ENCODE measurements at regions of chr17 and their contacts with region 1.

Region 1: GRCh38 chr17:2137342-2138098 is 82.6 kb downstream of the HIC1 start:
- DNase-seq: peak; percentile 51
- ATAC-seq: peak; percentile 86
- H3K4me3 ChIP-seq: no peak overlapping the region; the same call in 1 of the 2 replicates
- H3K27ac ChIP-seq: peak overlapping the region; percentile 87
- H3K4me1 ChIP-seq: peaks cover 41% of the 10 kb centered on the region
- H3K27me3 ChIP-seq: no peaks in the 10 kb centered on the region
- CTCF ChIP-seq: no peak
- EP300 ChIP-seq: no peak
- POLR2A ChIP-seq: peak; percentile 23; the same call in 1 of the 2 replicates
- RAD21 ChIP-seq: no peak

Region 2: GRCh38 chr17:2025220-2025621 is 112.3 kb before region 1 on chr17 and contains the start of gene RTN4RL1:
- CTCF ChIA-PET with region 1: no interaction called
- POLR2A ChIA-PET with region 1: no interaction called
- RAD21 ChIA-PET with region 1: no interaction called
- SMC1A ChIA-PET with region 1: no interaction called
- in situ Hi-C with region 1: no loop called
- intact Hi-C with region 1: no loop called
- DNase-seq: no peak
- ATAC-seq: no peak
- H3K4me3 ChIP-seq: peak within 1 kb of the TSS; percentile 74
- H3K27ac ChIP-seq: no peak within 1 kb of the TSS
- H3K4me1 ChIP-seq: peaks cover 4% of the 10 kb centered on the region
- H3K27me3 ChIP-seq: peaks cover 18 to 21% of the 10 kb centered on the region in 2 experiments
- CTCF ChIP-seq: no peak
- EP300 ChIP-seq: no peak
- POLR2A ChIP-seq: no peak
- RAD21 ChIP-seq: no peak
- polyA plus RNA-seq, gene RTN4RL1: not detected

Region 3: DNA sequence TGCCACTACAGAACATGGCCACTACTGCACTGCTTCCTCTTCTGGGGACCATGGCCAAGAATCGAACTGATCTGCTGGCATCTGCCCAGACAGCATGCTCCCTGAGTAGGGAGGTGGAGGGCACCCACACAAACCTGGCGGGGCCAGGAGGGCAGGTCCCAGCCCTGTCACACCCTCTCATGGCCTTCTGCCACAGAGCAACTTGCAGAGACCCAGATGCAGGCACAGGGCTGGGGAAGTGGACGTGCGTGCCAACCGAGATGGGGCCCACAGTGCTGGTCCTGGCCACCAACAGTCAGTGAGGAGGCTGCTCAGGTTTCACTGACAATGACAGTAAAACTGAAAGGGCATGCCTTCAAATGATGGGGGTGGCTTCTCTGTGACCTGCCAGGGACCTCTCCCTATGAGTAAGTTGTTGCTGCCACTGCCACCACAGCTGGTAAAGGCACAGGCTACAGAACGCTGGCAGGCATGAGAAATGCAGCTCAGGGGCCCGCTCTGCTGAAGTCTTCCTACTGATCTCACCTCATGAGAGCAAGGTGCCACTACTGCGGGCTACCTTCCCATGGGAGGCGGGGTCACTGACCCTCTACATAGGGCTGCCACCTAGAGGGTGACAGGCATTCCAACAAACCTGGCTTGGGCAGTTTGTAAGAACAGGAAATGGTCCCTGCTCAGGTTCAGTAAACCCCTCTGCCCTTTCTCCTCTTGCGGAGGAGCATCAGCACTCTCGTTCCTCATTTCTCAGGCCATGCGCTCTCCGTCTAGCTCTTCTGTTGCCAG is 67.1 kb before region 1 on chr17:
- CTCF ChIA-PET with region 1: interaction called, 6 read pairs
- POLR2A ChIA-PET with region 1: interaction called, 5 read pairs
- RAD21 ChIA-PET with region 1: interaction called, 5 read pairs
- SMC1A ChIA-PET with region 1: interaction called, 11 read pairs
- in situ Hi-C with region 1: no loop called
- intact Hi-C with region 1: no loop called
- DNase-seq: peak; percentile 96
- ATAC-seq: peak; percentile 93
- H3K4me3 ChIP-seq: peak overlapping the region; percentile 1; the same call in 1 of the 2 replicates
- H3K27ac ChIP-seq: peak overlapping the region; percentile 95
- H3K4me1 ChIP-seq: peaks cover 43% of the 10 kb centered on the region
- H3K27me3 ChIP-seq: no peaks in the 10 kb centered on the region
- CTCF ChIP-seq: peak in 2 of 3 experiments; percentile 7 to 22; a peak in 1 of 6 replicates
- EP300 ChIP-seq: peak; percentile 96 to 99
- POLR2A ChIP-seq: peak; percentile 79
- RAD21 ChIP-seq: 0 out of 2 replicates have a peak, but pooled peaks have one; percentile 0

Region 4: DNA sequence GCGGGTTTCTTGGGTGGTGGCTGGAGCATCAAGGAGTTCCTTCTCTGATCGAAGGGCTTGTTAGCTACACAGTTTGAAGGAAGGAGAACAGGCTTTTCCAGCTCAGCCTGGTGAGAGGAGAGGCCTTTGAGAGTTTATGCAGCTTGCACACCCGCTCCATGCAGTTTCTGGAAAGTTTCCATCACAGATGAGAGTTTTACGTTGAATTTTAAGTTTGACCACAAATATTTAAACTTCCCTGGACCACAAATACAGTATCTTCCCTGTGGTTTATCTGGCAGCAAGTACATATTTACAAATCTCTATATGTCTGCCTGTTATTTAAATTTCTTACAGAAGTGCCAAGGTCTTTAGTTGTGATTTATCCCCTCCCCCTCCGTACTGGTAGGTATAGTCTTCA is 25.8 kb before region 1 on chr17:
- CTCF ChIA-PET with region 1: no interaction called
- POLR2A ChIA-PET with region 1: interaction called, 4 read pairs
- RAD21 ChIA-PET with region 1: no interaction called
- SMC1A ChIA-PET with region 1: interaction called, 17 read pairs
- in situ Hi-C with region 1: no loop called
- intact Hi-C with region 1: no loop called
- DNase-seq: no peak
- ATAC-seq: no peak
- H3K4me3 ChIP-seq: no peak overlapping the region
- H3K27ac ChIP-seq: no peak overlapping the region
- H3K4me1 ChIP-seq: peaks cover 23% of the 10 kb centered on the region
- H3K27me3 ChIP-seq: no peaks in the 10 kb centered on the region
- CTCF ChIP-seq: no peak
- EP300 ChIP-seq: no peak
- POLR2A ChIP-seq: no peak
- RAD21 ChIP-seq: no peak

Region 5: GRCh38 chr17:2122641-2123302 is 14.7 kb before region 1 on chr17:
- CTCF ChIA-PET with region 1: interaction called, 65 read pairs
- POLR2A ChIA-PET with region 1: interaction called, 67 read pairs
- RAD21 ChIA-PET with region 1: interaction called, 30 read pairs
- SMC1A ChIA-PET with region 1: interaction called, 74 read pairs
- in situ Hi-C with region 1: no loop called
- intact Hi-C with region 1: no loop called
- DNase-seq: no peak
- ATAC-seq: peak; percentile 79
- H3K4me3 ChIP-seq: no peak overlapping the region
- H3K27ac ChIP-seq: peak overlapping the region; percentile 65
- H3K4me1 ChIP-seq: peaks cover 23% of the 10 kb centered on the region
- H3K27me3 ChIP-seq: no peaks in the 10 kb centered on the region
- CTCF ChIP-seq: 0 out of 6 replicates have a peak, but pooled peaks of 2 of the 3 experiments have one; percentile 1 to 7
- EP300 ChIP-seq: no peak
- POLR2A ChIP-seq: no peak
- RAD21 ChIP-seq: peak; percentile 19; the same call in 1 of the 2 replicates

Region 6: GRCh38 chr17:2188971-2189630 is 51.6 kb after region 1 on chr17:
- CTCF ChIA-PET with region 1: no interaction called
- POLR2A ChIA-PET with region 1: no interaction called
- RAD21 ChIA-PET with region 1: no interaction called
- SMC1A ChIA-PET with region 1: no interaction called
- in situ Hi-C with region 1: no loop called
- intact Hi-C with region 1: no loop called
- DNase-seq: no peak
- ATAC-seq: no peak
- H3K4me3 ChIP-seq: no peak overlapping the region
- H3K27ac ChIP-seq: no peak overlapping the region
- H3K4me1 ChIP-seq: peaks cover 21% of the 10 kb centered on the region
- H3K27me3 ChIP-seq: no peaks in the 10 kb centered on the region
- CTCF ChIP-seq: no peak
- EP300 ChIP-seq: no peak
- POLR2A ChIP-seq: no peak
- RAD21 ChIP-seq: no peak

Region 7: GRCh38 chr17:2511462-2512369 is 374.2 kb after region 1 on chr17 and contains the start of gene METTL16:
- CTCF ChIA-PET with region 1: no interaction called
- POLR2A ChIA-PET with region 1: no interaction called
- RAD21 ChIA-PET with region 1: no interaction called
- SMC1A ChIA-PET with region 1: no interaction called
- in situ Hi-C with region 1: no loop called
- intact Hi-C with region 1: no loop called
- DNase-seq: peak; percentile 96
- ATAC-seq: peak; percentile 100
- H3K4me3 ChIP-seq: peak within 1 kb of the TSS; percentile 91
- H3K27ac ChIP-seq: peak within 1 kb of the TSS; percentile 94
- H3K4me1 ChIP-seq: peaks cover 11% of the 10 kb centered on the region; the same call in 1 of the 2 replicates
- H3K27me3 ChIP-seq: no peaks in the 10 kb centered on the region
- CTCF ChIP-seq: no peak
- EP300 ChIP-seq: no peak
- POLR2A ChIP-seq: peak; percentile 86
- RAD21 ChIP-seq: no peak
- polyA plus RNA-seq, gene METTL16: 15.6 to 22.9 TPM

Measured in GM12878 (cell line).